SK-N-SH (cell line): ENCODE measurements at regions of chr1 and their contacts with region 1.

Region 1: DNA sequence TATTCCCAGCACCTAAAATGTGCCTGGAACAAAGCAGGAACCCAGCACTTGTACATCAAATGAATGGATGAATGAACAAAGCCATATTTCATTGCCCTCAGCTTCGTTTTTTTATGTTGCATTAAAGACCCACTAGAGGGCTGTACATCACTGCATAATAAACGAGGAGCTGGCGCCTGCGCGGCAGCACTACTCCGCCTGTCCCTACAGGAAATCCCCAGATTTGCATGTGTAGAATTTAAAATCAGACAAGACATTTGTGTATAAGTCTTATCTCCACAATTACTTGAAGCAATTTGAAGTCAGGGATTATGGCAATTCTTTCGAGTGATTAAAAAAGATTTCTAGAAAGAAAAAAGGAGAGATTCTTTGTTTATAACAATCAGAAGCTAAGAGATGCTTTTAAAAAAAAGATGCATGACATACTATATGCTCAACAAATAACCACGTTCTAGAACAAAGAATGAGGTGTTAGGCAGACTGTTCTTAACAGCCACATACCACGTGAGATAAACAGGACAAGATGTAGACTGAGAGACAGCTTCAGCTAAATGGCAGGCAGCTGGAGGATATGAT is 5.4 kb upstream of the NEK2 start:
- DNase-seq: peak; percentile 83
- H3K4me3 ChIP-seq: no peak overlapping the region
- H3K27ac ChIP-seq: peak overlapping the region in 1 of 2 experiments; percentile 36; a peak in 1 of 4 replicates
- H3K4me1 ChIP-seq: peaks cover 0 to 2% of the 10 kb centered on the region in 2 experiments; a peak in 3 of 4 replicates
- H3K27me3 ChIP-seq: no peaks in the 10 kb centered on the region
- CTCF ChIP-seq: peak; percentile 74
- EP300 ChIP-seq: no peak
- RAD21 ChIP-seq: peak; percentile 95

Region 2: GRCh38 chr1:211698161-211699026 is 17.6 kb after region 1 on chr1:
- CTCF ChIA-PET with region 1: interaction called, 73 read pairs
- POLR2A ChIA-PET with region 1: no interaction called
- DNase-seq: peak; percentile 86
- H3K4me3 ChIP-seq: no peak overlapping the region; a peak in 1 of 4 replicates
- H3K27ac ChIP-seq: no peak overlapping the region
- H3K4me1 ChIP-seq: no peaks in the 10 kb centered on the region
- H3K27me3 ChIP-seq: no peaks in the 10 kb centered on the region
- CTCF ChIP-seq: peak; percentile 95
- EP300 ChIP-seq: no peak
- RAD21 ChIP-seq: peak; percentile 89

Region 3: GRCh38 chr1:211705467-211706091 is 24.7 kb after region 1 on chr1:
- CTCF ChIA-PET with region 1: interaction called, 73 read pairs
- POLR2A ChIA-PET with region 1: no interaction called
- DNase-seq: no peak
- H3K4me3 ChIP-seq: no peak overlapping the region
- H3K27ac ChIP-seq: no peak overlapping the region
- H3K4me1 ChIP-seq: peaks cover 0 to 12% of the 10 kb centered on the region in 2 experiments; a peak in 1 of 4 replicates
- H3K27me3 ChIP-seq: no peaks in the 10 kb centered on the region
- CTCF ChIP-seq: no peak
- EP300 ChIP-seq: no peak
- RAD21 ChIP-seq: no peak

Region 4: DNA sequence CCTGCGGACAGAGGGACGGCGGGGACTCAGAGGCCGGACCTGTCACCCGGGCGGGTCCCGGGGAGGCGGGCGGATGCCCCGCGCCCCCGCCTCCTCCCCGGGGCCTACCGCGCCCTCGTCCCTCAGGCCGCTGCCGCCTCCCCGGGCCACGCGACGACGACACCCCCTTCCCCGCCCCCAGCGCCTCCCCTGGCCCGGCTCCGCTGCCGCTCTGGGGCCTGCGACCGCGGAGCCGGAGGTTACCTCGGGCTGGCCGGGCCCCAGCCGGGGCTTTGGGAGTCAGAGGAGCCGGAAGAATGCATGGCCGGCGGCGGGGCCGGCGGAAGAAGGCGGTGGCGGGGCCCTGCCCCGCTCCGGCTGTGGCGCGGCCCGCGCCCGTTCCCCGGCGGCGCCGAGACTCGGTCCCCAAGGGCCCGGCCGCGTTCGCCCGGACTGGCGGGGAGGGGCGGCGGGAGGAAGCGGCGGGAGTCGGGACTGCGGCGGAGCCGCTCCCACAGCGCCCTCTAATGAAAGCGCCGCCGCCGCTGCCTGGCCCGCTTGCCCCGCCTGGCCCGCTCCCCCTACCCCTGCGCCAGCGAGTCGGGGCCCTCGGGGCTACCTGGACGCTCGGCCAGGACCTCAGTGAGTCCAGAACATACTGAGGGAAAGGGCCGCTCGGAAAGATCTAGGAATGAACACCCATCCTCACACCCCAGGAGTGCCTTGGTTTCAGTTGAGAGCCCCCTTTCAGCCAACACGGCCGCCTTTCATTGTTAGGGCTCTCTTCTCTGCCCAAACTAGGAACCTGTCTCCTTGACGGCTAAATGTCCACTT is 149.7 kb after region 1 on chr1 and contains the start of gene LPGAT1:
- CTCF ChIA-PET with region 1: interaction called, 23 read pairs
- POLR2A ChIA-PET with region 1: no interaction called
- DNase-seq: peak; percentile 93
- H3K4me3 ChIP-seq: peak within 1 kb of the TSS; percentile 64 to 79
- H3K27ac ChIP-seq: peak within 1 kb of the TSS; percentile 28 to 82; a peak in 3 of 4 replicates
- H3K4me1 ChIP-seq: peaks cover 8 to 24% of the 10 kb centered on the region in 2 experiments; a peak in 3 of 4 replicates
- H3K27me3 ChIP-seq: no peaks in the 10 kb centered on the region
- CTCF ChIP-seq: peak; percentile 58
- EP300 ChIP-seq: no peak
- RAD21 ChIP-seq: peak; percentile 47
- polyA plus RNA-seq, gene LPGAT1: 4.8 and 6.3 TPM in 2 replicates

Region 5: DNA sequence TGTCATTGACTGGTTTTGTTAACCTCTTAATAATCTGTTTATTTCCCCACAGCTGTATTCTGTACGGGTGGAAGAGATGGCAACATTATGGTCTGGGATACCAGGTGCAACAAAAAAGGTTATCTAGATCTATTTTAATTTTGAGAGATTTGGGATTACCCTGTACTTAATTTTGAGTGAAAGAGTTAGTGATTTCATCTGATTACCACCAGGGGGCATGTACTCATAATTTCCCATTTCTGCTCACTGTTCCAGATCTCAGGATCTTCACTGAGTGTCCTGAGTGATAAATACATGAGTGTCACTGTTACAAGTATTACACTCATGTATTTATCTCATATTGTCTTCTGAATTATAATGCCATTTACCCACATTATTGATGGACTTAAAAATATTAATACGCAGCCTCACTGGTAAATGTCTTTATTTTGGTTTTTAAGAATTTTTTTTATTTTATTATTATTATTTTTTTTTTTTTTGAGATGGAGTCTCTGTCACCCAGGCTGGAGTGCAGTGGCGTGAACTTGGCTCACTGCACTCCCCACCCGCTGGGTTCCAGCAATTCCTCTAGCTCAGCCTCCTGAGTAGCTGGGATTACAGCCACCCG is 382.1 kb after region 1 on chr1:
- CTCF ChIA-PET with region 1: interaction called, 11 read pairs
- POLR2A ChIA-PET with region 1: no interaction called
- DNase-seq: peak; percentile 46
- H3K4me3 ChIP-seq: no peak overlapping the region
- H3K27ac ChIP-seq: no peak overlapping the region
- H3K4me1 ChIP-seq: no peaks in the 10 kb centered on the region
- H3K27me3 ChIP-seq: no peaks in the 10 kb centered on the region
- CTCF ChIP-seq: peak; percentile 79
- EP300 ChIP-seq: no peak
- RAD21 ChIP-seq: peak; percentile 67

Region 6: DNA sequence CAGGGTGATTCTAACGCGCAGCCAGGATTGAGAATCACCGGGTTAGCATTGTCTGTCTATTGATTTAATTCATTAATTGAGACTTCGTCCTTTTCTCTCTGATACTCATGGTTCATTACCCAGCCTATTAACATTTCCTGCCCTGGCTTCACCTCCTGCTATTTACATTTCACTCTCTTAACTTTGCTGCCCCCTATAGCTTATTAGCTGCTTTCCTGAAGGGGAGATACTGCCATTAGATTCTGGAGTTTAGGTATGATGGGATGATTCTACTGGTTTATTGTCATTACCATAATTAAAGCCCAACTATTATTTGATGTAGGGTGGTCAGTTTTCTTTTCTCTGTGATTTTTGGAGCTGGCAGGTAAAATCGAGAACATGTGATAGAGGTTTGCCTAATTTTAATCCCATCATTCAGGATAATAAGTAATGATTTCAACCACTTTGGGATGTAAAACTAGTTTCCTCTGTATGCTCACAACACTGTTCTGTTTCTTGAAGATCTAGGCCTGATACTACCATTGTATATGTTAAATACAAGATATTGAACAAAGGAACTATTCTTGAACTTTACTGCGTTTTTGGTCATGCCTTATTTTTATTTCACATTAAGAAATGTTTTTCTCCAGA is 610.8 kb after region 1 on chr1:
- CTCF ChIA-PET with region 1: interaction called, 14 read pairs
- POLR2A ChIA-PET with region 1: no interaction called
- DNase-seq: peak; percentile 71
- H3K4me3 ChIP-seq: no peak overlapping the region
- H3K27ac ChIP-seq: no peak overlapping the region
- H3K4me1 ChIP-seq: peaks cover 7 to 32% of the 10 kb centered on the region in 2 experiments; a peak in 3 of 4 replicates
- H3K27me3 ChIP-seq: no peaks in the 10 kb centered on the region
- CTCF ChIP-seq: peak; percentile 75
- EP300 ChIP-seq: no peak
- RAD21 ChIP-seq: peak; percentile 90